MCF 10A (cell line): ENCODE measurements at regions of chr6 and their contacts with region 1.

Region 1: GRCh38 chr6:144215932-144216667 is 65.8 kb downstream of the STX11 start:
- DNase-seq: peak; percentile 91
- H3K4me3 Mint-ChIP-seq: peak overlapping the region; percentile 83
- H3K27ac Mint-ChIP-seq: peak overlapping the region; percentile 84
- H3K4me1 Mint-ChIP-seq: peaks cover 9% of the 10 kb centered on the region
- H3K27me3 Mint-ChIP-seq: no peaks in the 10 kb centered on the region
- CTCF ChIP-seq: peak; percentile 71

Region 2: DNA sequence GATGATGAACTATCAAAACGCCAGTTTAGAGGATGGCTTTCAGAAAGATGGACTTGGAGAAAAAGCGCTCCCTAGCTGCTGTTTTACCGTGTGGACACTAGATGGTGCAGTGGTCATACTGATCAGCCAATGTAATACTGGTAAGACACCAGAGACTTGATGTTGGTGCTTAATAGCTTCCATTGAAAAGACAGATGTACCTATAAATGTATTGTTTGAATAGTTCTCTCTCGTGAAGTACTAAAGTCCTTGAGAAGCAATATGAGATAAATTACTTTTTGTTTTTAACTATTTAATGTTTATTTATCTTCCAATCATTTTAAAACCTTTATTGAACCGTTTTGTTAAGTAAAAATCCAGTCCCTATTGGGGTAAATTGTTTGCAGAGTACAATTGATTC is 640.7 kb before region 1 on chr6:
- CTCF ChIA-PET with region 1: interaction called, 11 read pairs
- POLR2A ChIA-PET with region 1: no interaction called
- intact Hi-C with region 1: loop called (anchors 5 kb)
- DNase-seq: peak; percentile 80
- H3K4me3 Mint-ChIP-seq: no peak overlapping the region
- H3K27ac Mint-ChIP-seq: no peak overlapping the region
- H3K4me1 Mint-ChIP-seq: peaks cover 14% of the 10 kb centered on the region
- H3K27me3 Mint-ChIP-seq: no peaks in the 10 kb centered on the region
- CTCF ChIP-seq: peak; percentile 71

Region 3: GRCh38 chr6:144075187-144075586 is 140.9 kb before region 1 on chr6:
- CTCF ChIA-PET with region 1: no interaction called
- POLR2A ChIA-PET with region 1: no interaction called
- intact Hi-C with region 1: no loop called
- DNase-seq: no peak
- H3K4me3 Mint-ChIP-seq: no peak overlapping the region
- H3K27ac Mint-ChIP-seq: no peak overlapping the region
- H3K4me1 Mint-ChIP-seq: no peaks in the 10 kb centered on the region
- H3K27me3 Mint-ChIP-seq: peaks cover 20% of the 10 kb centered on the region
- CTCF ChIP-seq: no peak

Region 4: GRCh38 chr6:144149891-144150709 is 66.0 kb before region 1 on chr6 and contains the start of gene STX11:
- CTCF ChIA-PET with region 1: interaction called, 3 read pairs
- POLR2A ChIA-PET with region 1: interaction called, 3 read pairs
- intact Hi-C with region 1: loop called (anchors 2 kb)
- DNase-seq: peak; percentile 48
- H3K4me3 Mint-ChIP-seq: peak within 1 kb of the TSS; percentile 67
- H3K27ac Mint-ChIP-seq: peak within 1 kb of the TSS; percentile 22
- H3K4me1 Mint-ChIP-seq: no peaks in the 10 kb centered on the region
- H3K27me3 Mint-ChIP-seq: no peaks in the 10 kb centered on the region
- CTCF ChIP-seq: no peak
- total RNA-seq, gene STX11: 1.1 and 2.1 TPM in 2 replicates

Region 5: DNA sequence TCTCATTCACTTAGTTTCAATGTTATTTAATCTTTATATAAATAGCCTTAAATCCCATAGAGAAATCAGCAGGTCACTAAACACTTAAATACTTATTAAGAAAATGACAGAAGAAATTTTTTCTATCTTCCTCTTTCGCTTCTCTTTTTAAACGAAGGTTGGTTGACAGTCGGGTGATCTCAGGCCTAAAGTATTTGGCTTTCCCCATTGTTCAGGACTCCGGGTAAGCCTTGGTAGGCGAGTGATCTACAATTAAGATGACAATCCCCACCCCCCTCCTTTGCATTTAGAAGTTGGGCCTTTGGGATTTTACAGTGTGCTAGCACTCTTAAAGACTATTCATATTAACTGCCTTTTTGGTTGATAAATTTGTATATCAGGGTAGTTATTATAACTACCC is 49.3 kb after region 1 on chr6:
- CTCF ChIA-PET with region 1: interaction called, 6 read pairs
- POLR2A ChIA-PET with region 1: interaction called, 4 read pairs
- intact Hi-C with region 1: loop called (anchors 1 kb)
- DNase-seq: peak; percentile 84
- H3K4me3 Mint-ChIP-seq: peak overlapping the region; percentile 56
- H3K27ac Mint-ChIP-seq: peak overlapping the region; percentile 85
- H3K4me1 Mint-ChIP-seq: peaks cover 22% of the 10 kb centered on the region
- H3K27me3 Mint-ChIP-seq: no peaks in the 10 kb centered on the region
- CTCF ChIP-seq: no peak

Region 6: GRCh38 chr6:144296973-144297372 is 80.9 kb after region 1 on chr6:
- CTCF ChIA-PET with region 1: interaction called, 11 read pairs
- POLR2A ChIA-PET with region 1: interaction called, 4 read pairs
- intact Hi-C with region 1: no loop called
- DNase-seq: peak; percentile 41
- H3K4me3 Mint-ChIP-seq: peak overlapping the region; percentile 0
- H3K27ac Mint-ChIP-seq: peak overlapping the region; percentile 57
- H3K4me1 Mint-ChIP-seq: peaks cover 9% of the 10 kb centered on the region
- H3K27me3 Mint-ChIP-seq: no peaks in the 10 kb centered on the region
- CTCF ChIP-seq: no peak

Region 7: DNA sequence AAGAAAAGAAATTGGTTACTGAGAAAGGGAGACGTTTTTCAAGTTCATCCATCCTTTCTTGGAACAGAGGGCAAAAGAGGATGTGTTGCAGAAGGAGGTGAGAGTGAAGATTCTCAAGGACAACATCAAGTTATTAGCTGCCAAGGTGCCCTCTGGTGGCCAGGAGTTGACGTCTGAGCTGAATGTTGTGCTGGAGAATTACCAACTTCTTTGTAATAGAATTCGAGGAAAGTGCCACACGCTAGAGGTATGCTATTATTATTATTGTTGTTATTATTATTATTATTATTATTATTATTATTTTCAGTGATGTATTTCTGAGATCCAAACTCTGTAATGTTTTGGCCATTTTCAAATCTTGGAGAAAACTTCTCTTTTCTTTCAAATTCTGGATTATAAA is 266.0 kb after region 1 on chr6:
- CTCF ChIA-PET with region 1: interaction called, 13 read pairs
- POLR2A ChIA-PET with region 1: interaction called, 9 read pairs
- intact Hi-C with region 1: loop called (anchors 1 kb)
- DNase-seq: peak; percentile 84
- H3K4me3 Mint-ChIP-seq: no peak overlapping the region
- H3K27ac Mint-ChIP-seq: no peak overlapping the region
- H3K4me1 Mint-ChIP-seq: no peaks in the 10 kb centered on the region
- H3K27me3 Mint-ChIP-seq: no peaks in the 10 kb centered on the region
- CTCF ChIP-seq: peak; percentile 65